ENCODE measurements at regions of chr16 and their contacts with region 1.

Region 1: GRCh38 chr16:23435500-23435899 is 17.5 kb downstream of the COG7 start:
- DNase-seq: peak; percentile 81
- H3K4me3 ChIP-seq: no peak overlapping the region
- H3K27ac ChIP-seq: no peak overlapping the region
- H3K4me1 ChIP-seq: no peaks in the 10 kb centered on the region
- H3K27me3 ChIP-seq: no peaks in the 10 kb centered on the region
- CTCF ChIP-seq: peak; percentile 89 to 96
- POLR2A ChIP-seq: no peak

Region 2: GRCh38 chr16:23013481-23013880 is 422.0 kb before region 1 on chr16:
- CTCF ChIA-PET with region 1: no interaction called
- POLR2A ChIA-PET with region 1: no interaction called
- dilution Hi-C with region 1: no loop called
- intact Hi-C with region 1: no loop called
- DNase-seq: peak; percentile 6
- H3K4me3 ChIP-seq: no peak overlapping the region
- H3K27ac ChIP-seq: no peak overlapping the region
- H3K4me1 ChIP-seq: no peaks in the 10 kb centered on the region
- H3K27me3 ChIP-seq: no peaks in the 10 kb centered on the region
- CTCF ChIP-seq: peak in 1 of 2 donors; percentile 18
- POLR2A ChIP-seq: no peak

Region 3: GRCh38 chr16:23060458-23061320 is 374.8 kb before region 1 on chr16:
- CTCF ChIA-PET with region 1: interaction called, 10 read pairs
- POLR2A ChIA-PET with region 1: no interaction called
- dilution Hi-C with region 1: no loop called
- intact Hi-C with region 1: loop called (anchors 2 kb)
- DNase-seq: peak; percentile 78
- H3K4me3 ChIP-seq: no peak overlapping the region
- H3K27ac ChIP-seq: no peak overlapping the region
- H3K4me1 ChIP-seq: no peaks in the 10 kb centered on the region
- H3K27me3 ChIP-seq: no peaks in the 10 kb centered on the region
- CTCF ChIP-seq: peak; percentile 70 to 74
- POLR2A ChIP-seq: no peak

Region 4: DNA sequence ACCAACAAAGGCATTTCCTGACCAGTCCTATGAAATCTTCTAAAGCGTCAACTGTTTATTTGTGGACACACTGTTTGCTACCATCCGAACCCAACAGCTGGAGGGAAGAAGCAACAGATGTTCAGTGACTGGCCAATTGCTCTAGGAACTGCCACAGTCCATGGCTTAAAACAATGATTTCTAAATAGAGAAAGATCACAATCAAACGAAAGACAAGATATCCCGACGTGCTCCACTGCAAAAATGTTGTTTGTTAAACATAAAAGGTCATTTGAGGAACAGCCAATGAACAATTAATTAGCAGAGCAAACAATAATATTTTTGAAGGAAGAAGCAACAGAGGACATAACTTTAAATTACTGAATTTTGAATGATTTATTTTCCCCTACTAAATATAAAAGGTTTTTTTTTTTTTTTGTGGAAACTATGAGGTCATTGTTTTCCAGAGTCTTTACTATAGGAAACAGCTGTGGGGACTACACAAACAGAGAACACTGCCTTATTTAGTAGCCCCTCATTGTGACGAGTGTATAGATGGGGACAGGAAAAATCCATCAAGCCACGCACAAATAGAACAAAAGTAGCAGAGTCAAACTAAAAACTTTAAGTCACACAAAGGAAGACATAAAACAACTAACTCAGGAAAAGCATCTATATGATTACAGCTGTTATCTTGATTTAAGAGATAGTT is 303.4 kb before region 1 on chr16:
- CTCF ChIA-PET with region 1: interaction called, 10 read pairs
- POLR2A ChIA-PET with region 1: no interaction called
- dilution Hi-C with region 1: no loop called
- intact Hi-C with region 1: no loop called
- DNase-seq: peak; percentile 96
- H3K4me3 ChIP-seq: peak overlapping the region in 1 of 3 experiments; percentile 43
- H3K27ac ChIP-seq: peak overlapping the region; percentile 97
- H3K4me1 ChIP-seq: peaks cover 45% of the 10 kb centered on the region
- H3K27me3 ChIP-seq: no peaks in the 10 kb centered on the region
- CTCF ChIP-seq: no peak
- POLR2A ChIP-seq: peak; percentile 31

Region 5: DNA sequence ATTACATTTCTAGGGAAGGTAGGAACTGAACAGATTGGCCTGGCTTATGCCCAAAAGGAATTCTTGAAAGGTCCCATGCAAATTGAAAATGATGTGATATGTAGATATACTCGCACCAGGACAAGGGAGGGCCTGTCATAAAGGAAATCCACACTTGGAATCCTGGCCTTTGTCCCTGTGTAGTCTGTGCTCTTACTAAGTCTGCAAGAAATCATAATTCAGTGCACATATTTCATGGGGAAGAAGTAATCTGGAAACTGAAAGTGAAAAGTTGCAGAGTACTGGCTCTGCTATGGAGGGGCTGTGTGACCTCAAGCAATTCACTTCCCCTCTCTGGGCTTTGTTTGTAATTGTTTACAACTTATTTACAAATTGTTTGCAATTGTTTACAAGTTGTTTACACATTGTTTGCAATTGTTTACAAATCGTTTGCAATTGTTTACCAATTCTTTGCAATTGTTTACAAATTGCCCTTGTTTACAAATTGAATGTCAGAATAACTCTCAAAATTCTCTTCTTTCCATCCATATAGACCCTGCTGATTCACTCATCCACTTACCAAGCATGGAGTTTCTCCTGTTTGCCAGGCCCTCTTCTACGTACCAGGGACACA is 240.0 kb before region 1 on chr16:
- CTCF ChIA-PET with region 1: interaction called, 12 read pairs
- POLR2A ChIA-PET with region 1: no interaction called
- dilution Hi-C with region 1: no loop called
- intact Hi-C with region 1: no loop called
- DNase-seq: no peak
- H3K4me3 ChIP-seq: no peak overlapping the region
- H3K27ac ChIP-seq: no peak overlapping the region
- H3K4me1 ChIP-seq: no peaks in the 10 kb centered on the region
- H3K27me3 ChIP-seq: peaks cover 0 to 5% of the 10 kb centered on the region in 2 experiments
- CTCF ChIP-seq: no peak
- POLR2A ChIP-seq: no peak

Region 6: GRCh38 chr16:23359092-23359760 is 76.3 kb before region 1 on chr16:
- CTCF ChIA-PET with region 1: interaction called, 12 read pairs
- POLR2A ChIA-PET with region 1: no interaction called
- dilution Hi-C with region 1: no loop called
- intact Hi-C with region 1: loop called (anchors 5 kb)
- DNase-seq: peak; percentile 59
- H3K4me3 ChIP-seq: no peak overlapping the region
- H3K27ac ChIP-seq: no peak overlapping the region
- H3K4me1 ChIP-seq: no peaks in the 10 kb centered on the region
- H3K27me3 ChIP-seq: no peaks in the 10 kb centered on the region
- CTCF ChIP-seq: no peak
- POLR2A ChIP-seq: no peak

Region 7: DNA sequence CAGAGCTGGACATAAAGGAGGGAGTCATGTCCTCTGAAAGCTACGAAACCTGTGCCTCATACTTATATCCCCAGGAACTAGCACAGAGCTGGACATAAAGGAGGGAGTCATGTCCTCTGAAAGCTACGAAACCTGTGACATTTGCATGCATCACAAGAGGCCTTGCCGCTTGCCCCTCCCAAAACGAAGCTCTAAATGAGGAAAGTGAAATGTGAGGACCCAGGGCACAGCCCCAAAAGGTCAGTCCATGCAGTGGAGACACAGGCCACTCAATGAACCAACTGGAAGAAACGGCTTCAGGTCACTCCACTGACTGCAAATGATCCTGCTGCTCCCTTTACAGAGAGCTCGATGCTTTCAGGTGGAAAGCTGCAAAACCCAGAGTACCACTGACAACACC is 20.8 kb before region 1 on chr16:
- CTCF ChIA-PET with region 1: interaction called, 18 read pairs
- POLR2A ChIA-PET with region 1: no interaction called
- dilution Hi-C with region 1: no loop called
- intact Hi-C with region 1: no loop called
- DNase-seq: no peak
- H3K4me3 ChIP-seq: no peak overlapping the region
- H3K27ac ChIP-seq: no peak overlapping the region
- H3K4me1 ChIP-seq: no peaks in the 10 kb centered on the region
- H3K27me3 ChIP-seq: no peaks in the 10 kb centered on the region
- CTCF ChIP-seq: no peak
- POLR2A ChIP-seq: no peak

Region 8: GRCh38 chr16:23482778-23483177 is 47.3 kb after region 1 on chr16:
- CTCF ChIA-PET with region 1: no interaction called
- POLR2A ChIA-PET with region 1: no interaction called
- dilution Hi-C with region 1: no loop called
- intact Hi-C with region 1: no loop called
- DNase-seq: no peak
- H3K4me3 ChIP-seq: no peak overlapping the region
- H3K27ac ChIP-seq: no peak overlapping the region
- H3K4me1 ChIP-seq: no peaks in the 10 kb centered on the region
- H3K27me3 ChIP-seq: no peaks in the 10 kb centered on the region
- CTCF ChIP-seq: no peak
- POLR2A ChIP-seq: no peak

Region 9: DNA sequence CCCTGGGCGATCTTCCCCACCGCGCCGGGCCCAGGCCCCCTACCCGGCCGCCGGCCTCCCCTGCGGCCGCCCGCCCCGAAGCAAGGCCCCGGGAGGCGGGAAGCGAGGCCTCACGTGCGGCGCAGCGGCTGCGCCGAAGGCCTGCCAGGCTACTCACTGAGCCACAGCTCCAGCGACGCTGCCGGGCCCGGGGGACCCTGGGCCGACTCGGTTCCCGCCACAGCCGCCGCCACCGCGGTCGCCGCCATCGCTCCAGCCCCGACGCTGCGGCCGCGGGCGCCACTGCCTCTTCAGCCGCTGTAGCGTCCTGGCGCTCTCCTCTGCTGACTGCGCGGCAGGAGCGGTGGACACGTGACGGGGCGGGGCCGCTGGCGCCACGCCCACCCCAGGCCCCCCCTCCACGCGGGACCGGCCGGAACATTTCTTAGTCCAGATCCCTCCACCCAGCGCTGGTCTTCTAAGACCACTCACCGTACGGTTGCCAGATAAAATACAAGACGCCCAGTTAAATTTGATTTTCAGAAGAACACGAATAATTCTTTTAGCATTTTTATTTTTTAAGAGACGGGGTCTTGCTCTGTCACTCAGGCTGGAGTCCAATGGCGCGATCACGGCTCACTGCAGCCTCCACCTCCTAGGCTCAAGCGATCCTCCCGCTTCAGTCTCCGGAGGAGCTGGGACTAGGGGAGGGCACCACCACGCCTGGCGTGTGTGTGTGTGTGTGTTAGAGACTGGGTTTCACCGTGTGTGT is 74.8 kb after region 1 on chr16 and contains the start of gene GGA2:
- CTCF ChIA-PET with region 1: interaction called, 12 read pairs
- POLR2A ChIA-PET with region 1: no interaction called
- dilution Hi-C with region 1: no loop called
- intact Hi-C with region 1: no loop called
- DNase-seq: peak; percentile 91
- H3K4me3 ChIP-seq: peak within 1 kb of the TSS; percentile 10 to 69 (median 60)
- H3K27ac ChIP-seq: peak within 1 kb of the TSS; percentile 27
- H3K4me1 ChIP-seq: peaks cover under 1% of the 10 kb centered on the region
- H3K27me3 ChIP-seq: no peaks in the 10 kb centered on the region
- CTCF ChIP-seq: no peak
- POLR2A ChIP-seq: peak; percentile 88
- total RNA-seq, gene GGA2: 67.5 and 73.1 TPM in 2 replicates